ENCODE measurements at regions of chr11 and their contacts with region 1.

Region 1: GRCh38 chr11:36265793-36266628 is 23.2 kb downstream of the COMMD9 start:
- DNase-seq: no peak
- H3K4me3 ChIP-seq: no peak overlapping the region
- CTCF ChIP-seq: peak; percentile 87

Region 2: DNA sequence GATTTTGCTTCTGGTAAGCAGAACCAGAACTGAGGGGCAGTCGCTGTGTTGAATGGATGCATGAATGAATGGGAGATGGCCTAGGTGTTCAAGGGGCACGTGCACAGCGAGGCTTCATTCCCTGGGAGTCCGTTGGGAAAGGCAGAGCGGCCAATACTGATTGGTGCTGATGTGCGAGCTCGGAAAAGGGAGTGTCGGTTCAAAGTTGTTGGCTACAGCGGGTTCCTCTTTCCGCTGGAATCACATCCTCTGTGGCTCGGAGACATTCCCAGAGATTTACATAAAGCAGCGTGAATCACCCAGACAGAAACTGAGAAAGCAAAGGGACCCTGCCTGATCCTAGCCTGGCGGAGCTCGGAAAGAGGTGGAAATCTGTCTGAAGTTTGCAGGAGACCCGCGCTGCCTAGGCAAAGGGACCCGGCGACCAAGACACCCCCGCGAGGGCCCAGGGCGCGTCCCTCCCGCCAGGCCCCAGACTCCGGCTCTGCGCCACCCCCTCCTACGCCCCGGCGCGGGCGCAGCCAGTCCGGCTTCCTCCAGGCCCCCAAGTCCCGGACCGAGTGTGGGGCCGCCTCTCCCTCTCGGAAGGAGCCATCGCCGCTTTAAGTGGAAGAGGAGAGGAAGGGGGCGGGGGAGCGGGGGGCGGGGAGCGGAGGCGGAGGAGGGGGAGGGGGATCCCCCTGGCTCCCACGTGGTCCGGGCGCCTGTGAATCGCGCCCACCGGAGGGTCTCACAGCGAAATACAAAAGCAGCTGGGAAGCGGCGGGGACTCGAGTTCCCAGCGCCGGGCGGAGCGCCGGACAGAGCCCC is 648.1 kb before region 1 on chr11 and contains the start of gene FJX1:
- CTCF ChIA-PET with region 1: interaction called, 38 read pairs
- POLR2A ChIA-PET with region 1: interaction called, 4 read pairs
- DNase-seq: no peak
- H3K4me3 ChIP-seq: peak within 1 kb of the TSS; percentile 69
- CTCF ChIP-seq: no peak

Region 3: GRCh38 chr11:36249246-36249645 is 16.8 kb before region 1 on chr11:
- CTCF ChIA-PET with region 1: interaction called, 70 read pairs
- POLR2A ChIA-PET with region 1: no interaction called
- DNase-seq: peak; percentile 55
- H3K4me3 ChIP-seq: no peak overlapping the region
- CTCF ChIP-seq: no peak

Region 4: DNA sequence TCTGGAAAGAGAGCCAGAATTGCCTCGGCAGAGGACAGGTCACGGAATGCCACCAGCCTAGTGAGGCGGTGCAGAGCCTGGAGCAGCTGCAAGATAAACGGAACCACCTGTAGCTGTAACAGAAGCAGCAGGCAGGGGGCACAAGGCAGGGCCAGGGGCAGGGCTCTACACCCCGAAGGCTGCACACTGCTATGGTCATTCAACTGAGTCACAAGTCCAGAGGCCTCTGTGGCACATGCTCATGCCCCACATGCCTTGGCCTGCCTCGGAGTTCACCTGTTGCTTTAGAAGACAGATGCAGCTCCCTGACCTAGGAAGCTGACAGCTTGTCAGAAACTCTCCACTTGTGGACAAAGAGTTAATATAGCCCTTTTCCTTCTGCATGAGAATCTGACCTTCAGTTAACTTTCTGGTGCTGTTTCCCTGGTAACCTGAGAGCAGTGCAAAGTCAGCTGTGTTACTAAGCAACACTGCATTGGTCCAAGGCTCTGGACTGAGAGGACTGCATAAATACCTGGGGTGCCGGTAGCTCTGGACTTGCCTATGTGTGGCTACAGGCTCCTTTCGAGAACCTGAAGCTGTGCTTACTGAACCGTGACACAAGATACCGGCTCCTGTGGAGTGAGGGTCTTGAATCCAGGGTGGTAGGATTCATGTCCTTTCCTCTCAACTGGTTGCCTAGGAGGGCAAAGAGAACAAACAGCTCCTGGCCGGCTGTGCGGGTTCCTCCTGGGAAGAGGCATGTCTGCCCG is 12.7 kb after region 1 on chr11:
- CTCF ChIA-PET with region 1: interaction called, 48 read pairs
- POLR2A ChIA-PET with region 1: no interaction called
- DNase-seq: no peak
- H3K4me3 ChIP-seq: no peak overlapping the region
- CTCF ChIP-seq: no peak

Region 5: DNA sequence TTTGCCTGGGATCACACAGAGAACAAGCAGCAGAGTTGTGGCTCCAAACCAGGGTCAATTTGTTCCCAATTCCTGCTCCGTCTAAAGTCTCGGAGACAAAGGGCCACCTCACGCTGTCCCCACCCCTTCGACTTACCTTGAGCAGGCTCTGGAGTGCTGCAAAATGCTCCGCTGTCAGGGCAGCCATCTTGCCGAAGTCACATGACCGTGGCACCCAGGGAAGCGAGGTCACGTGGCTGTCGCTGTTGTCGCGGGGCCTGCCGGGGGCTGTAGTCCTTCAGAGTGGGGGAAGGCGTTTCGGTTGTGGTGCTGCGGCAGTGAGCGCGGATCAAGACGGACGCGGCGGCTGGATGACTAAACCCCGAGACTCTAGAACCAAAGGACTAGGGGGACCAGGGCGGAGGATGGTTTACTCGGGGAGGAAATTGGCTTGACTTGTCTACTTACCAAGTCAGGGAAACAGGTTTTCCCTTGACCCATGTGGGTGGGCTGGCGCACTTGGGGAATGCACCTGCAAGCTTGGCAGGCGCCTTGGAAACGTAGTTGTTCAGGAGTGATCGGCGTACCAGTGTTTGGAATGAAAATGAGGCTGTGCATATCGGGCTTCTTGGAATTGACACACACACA is 23.3 kb after region 1 on chr11 and contains the start of gene COMMD9:
- CTCF ChIA-PET with region 1: no interaction called
- POLR2A ChIA-PET with region 1: no interaction called
- DNase-seq: peak; percentile 37
- H3K4me3 ChIP-seq: peak within 1 kb of the TSS; percentile 90
- CTCF ChIP-seq: no peak

Region 6: DNA sequence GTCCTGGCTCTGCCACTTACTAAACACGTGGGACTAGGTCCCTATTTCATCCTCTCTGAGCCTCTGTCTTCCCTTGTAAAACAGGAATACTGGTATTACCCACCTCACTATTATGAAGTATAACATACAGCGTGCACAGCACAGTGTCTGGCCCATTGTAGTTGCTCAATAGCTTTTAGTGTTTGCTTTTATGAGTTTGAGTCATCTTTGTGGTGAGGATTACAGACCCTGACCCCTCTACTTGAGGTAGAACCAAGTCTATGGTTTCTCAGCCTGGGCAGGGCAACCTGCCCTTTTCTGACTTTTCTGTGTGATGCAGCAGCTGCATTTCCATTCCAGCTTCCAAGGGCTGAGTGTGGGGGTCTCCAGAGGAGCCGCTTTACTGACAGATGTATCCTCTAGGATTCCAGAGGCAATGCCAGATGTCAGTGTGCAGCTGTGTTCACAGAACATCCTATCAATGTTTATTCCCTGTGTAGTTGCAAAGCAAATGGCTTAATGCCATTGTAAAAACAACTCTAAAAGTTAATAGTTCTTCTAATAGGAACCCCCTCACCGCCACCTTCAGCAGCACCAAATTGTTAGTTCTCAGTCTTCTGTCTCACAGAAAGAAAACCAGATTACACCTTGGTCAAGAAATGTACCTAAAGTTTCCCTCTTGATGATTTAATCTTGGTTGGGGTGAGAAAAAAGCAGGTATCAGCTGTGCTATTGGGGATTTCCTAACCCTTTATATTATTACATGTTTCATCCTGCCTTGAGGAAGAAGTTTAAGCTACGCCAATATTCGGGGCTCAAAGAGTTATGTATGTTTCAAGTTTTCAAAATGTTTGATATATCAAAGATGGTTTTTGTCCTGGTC is 46.8 kb after region 1 on chr11:
- CTCF ChIA-PET with region 1: no interaction called
- POLR2A ChIA-PET with region 1: no interaction called
- DNase-seq: no peak
- H3K4me3 ChIP-seq: no peak overlapping the region
- CTCF ChIP-seq: no peak